ENCODE measurements at regions of chr15 and their contacts with region 1.

Region 1: GRCh38 chr15:60656481-60656880 is 177.5 kb upstream of the ICE2 start:
- DNase-seq: no peak
- ATAC-seq: no peak
- H3K4me3 ChIP-seq: no peak overlapping the region
- H3K27ac ChIP-seq: no peak overlapping the region
- H3K4me1 ChIP-seq: no peaks in the 10 kb centered on the region
- H3K27me3 ChIP-seq: peaks cover 4% of the 10 kb centered on the region; the same call in 1 of the 2 replicates
- CTCF ChIP-seq: no peak

Region 2: GRCh38 chr15:60605879-60606304 is 50.6 kb before region 1 on chr15:
- CTCF ChIA-PET with region 1: no interaction called
- POLR2A ChIA-PET with region 1: no interaction called
- in situ Hi-C with region 1: no loop called
- intact Hi-C with region 1: loop called (anchors 5 kb)
- DNase-seq: no peak
- ATAC-seq: no peak
- H3K4me3 ChIP-seq: no peak overlapping the region
- H3K27ac ChIP-seq: no peak overlapping the region
- H3K4me1 ChIP-seq: peaks cover 4% of the 10 kb centered on the region; the same call in 1 of the 2 replicates
- H3K27me3 ChIP-seq: peaks cover 44% of the 10 kb centered on the region
- CTCF ChIP-seq: no peak

Measured in Panc1 (cell line).